Heart right ventricle (tissue), 16 donors: ENCODE measurements at regions of chr1 and their contacts with region 1.

Region 1: DNA sequence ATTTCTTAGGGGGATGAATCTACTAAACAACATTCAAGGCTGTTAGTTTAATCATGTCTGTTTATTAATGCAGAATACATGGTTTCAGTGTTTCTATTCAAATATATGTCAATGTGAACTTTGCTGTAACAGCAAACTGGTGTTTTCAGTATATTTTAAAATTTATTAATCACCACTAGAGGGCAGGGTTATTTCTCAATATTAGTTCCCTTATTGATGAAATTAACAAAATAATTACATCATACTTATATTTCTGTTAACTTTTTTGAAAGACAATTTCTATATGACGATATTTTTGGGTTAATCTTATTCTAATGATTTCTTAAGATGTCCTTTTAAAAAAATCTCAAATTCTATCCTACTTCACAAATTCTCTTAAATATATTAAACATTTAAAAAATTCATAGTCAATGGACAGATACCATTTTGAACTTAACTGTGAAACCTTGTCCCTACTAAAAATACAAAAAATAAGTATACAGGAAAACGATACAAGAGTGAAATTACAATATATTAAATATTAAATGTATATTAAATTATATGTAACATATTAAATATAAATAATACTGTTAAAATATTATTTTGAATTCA is 1034.1 kb upstream of the PRMT6 start:
- DNase-seq: no peak
- ATAC-seq: no peak
- H3K4me3 ChIP-seq: no peak overlapping the region
- H3K27ac ChIP-seq: no peak overlapping the region
- H3K4me1 ChIP-seq: no peaks in the 10 kb centered on the region
- H3K27me3 ChIP-seq: no peaks in the 10 kb centered on the region
- CTCF ChIP-seq: peak in 6 of 9 donors; percentile 24 to 55 (median 42)

Region 2: GRCh38 chr1:106233511-106233910 is 211.1 kb after region 1 on chr1:
- intact Hi-C with region 1: no loop called
- DNase-seq: no peak
- ATAC-seq: no peak
- H3K4me3 ChIP-seq: no peak overlapping the region
- H3K27ac ChIP-seq: no peak overlapping the region
- H3K4me1 ChIP-seq: no peaks in the 10 kb centered on the region
- H3K27me3 ChIP-seq: no peaks in the 10 kb centered on the region
- CTCF ChIP-seq: no peak

Region 3: DNA sequence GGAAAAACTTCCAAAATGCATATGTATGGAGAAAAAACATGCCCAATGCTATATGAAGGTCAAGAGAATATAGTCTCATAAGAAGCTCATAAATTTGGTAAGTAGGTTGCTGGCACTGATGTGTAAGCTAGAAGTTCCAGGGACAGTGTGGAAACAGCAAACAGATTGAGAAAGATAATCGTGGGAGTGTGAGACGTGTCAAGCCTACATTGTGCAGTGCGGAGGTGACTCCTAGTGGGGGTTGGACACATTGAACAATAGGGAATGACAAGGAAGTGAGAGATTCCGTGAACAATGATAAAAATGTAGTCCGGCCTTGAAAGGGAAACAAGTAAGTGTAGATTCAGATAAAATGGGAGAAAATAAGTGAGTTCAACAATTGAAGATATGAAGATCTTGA is 245.6 kb after region 1 on chr1:
- intact Hi-C with region 1: loop called in 1 of 10 experiments (anchors 10 kb)
- DNase-seq: no peak
- ATAC-seq: no peak
- H3K4me3 ChIP-seq: no peak overlapping the region
- H3K27ac ChIP-seq: no peak overlapping the region
- H3K4me1 ChIP-seq: no peaks in the 10 kb centered on the region
- H3K27me3 ChIP-seq: no peaks in the 10 kb centered on the region
- CTCF ChIP-seq: peak in 5 of 9 donors; percentile 18 to 46 (median 25)